Posterior vena cava (tissue), 2 donors: ENCODE measurements at regions of chr19 and their contacts with region 1.

Region 1: DNA sequence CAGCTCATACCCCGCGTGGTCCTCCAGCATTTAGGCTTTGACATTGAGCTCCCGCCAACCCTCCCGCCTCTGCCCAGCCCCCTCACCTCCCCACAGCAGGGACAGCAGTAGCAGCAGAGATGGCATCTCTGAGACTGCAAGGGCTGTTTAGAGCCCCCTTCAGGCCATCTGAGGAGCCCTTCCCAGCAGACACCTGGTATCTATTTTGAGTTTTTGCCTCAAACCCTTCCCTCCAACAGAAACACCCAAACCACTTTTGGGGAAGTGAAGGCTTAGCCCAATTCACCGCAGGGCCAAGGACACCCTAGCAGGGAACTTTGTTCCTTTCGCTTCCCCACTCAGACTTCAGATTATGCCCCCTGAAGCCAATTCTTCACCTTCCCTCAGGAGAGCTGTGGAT is 6.3 kb upstream of the ZNF175 start:
- DNase-seq: no peak

Region 2: GRCh38 chr19:51259348-51260245 is 305.2 kb before region 1 on chr19:
- intact Hi-C with region 1: no loop called
- DNase-seq: no peak

Region 3: DNA sequence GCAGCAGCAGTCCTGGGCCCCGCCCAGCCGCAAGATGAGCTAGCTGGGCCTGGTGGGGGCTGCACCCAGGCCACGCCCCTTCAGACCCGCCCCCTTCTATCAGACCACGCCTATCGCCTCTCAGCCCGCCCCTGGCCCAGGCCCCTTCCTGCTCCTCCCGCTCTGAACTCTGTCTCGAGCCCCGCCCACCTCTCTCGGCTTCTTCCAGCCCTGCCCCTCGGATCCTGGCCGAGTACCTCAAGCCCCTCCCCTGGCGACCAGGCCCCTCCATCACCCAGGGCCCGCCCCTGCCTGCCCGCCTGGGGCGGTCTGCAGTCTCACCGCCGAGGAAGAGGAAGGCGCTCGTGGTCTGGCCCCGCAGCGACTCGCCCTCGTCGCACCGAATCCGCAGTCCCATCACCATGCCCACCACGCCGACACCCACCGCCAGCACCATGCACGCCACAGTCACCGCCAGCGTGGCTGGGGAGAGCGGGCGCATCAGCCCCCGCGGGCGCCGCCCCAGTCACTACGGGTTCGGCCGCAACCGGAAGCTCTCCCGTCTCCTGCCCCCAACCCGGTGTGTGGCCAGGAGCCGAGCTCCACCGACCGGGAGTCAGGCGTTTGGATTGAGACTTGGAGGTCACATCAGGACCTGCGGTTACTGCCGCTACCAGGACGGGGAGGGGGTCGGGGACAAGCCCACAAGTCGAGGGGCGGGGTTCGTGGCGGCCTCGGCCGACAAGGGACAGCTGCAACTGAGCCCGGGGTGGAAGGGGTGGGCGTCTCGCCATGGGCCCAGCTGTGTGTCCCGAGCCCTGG is 197.0 kb before region 1 on chr19:
- intact Hi-C with region 1: no loop called
- DNase-seq: peak; percentile 100

Region 4: GRCh38 chr19:51514866-51515481 is 49.8 kb before region 1 on chr19:
- intact Hi-C with region 1: no loop called
- DNase-seq: no peak

Region 5: DNA sequence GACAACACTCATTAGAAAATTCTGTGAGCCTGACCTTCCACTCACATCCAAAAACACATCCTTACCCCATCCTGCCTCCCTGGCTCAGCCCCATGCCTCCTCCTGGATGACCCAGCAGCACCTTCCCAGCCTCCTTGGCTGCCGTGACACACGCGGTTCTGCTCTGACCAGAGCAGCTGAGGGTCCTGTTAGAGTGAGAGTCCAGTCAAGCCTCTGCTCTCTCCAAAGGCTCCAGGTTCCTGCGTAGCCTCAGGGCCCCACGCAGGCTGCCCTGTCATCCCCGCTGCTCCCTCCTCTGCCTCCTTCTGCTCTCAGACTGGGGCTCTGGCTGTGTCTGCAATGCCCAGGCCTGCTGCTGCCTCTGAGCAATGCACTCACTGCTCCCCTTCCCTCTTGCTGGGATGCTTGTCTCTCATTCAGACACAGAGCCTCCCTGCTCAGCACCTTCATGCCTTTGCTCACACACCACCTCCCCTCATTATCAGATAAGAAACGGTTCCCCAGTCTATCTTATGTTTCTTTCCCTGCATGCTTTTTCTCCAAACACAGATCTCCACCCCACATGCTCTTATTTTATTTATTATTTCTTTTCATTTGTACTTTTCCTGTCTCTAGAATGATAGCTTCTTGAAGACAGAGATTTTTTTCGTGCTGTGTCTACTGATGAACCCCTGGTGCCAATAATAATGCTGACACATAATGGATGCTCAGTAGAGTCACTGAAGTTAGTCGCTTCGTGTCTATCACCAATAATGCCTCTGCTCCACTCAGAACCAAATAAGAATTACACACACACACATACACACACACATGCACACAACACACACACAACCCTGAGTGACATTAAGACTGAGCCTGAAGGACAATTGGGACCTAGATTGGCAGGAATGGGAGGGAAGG is 23.1 kb before region 1 on chr19:
- intact Hi-C with region 1: loop called in 1 of 2 experiments (anchors 1 kb)
- DNase-seq: no peak